ENCODE measurements at regions of chr20 and their contacts with region 1.

Region 1: GRCh38 chr20:19903168-19903811 is 113.9 kb upstream of the NAA20 start:
- DNase-seq: peak; percentile 76
- ATAC-seq: peak; percentile 68
- H3K4me3 ChIP-seq: no peak overlapping the region
- H3K27ac ChIP-seq: peak overlapping the region; percentile 35; the same call in 1 of the 2 replicates
- H3K4me1 ChIP-seq: peaks cover 3% of the 10 kb centered on the region
- H3K27me3 ChIP-seq: no peaks in the 10 kb centered on the region
- CTCF ChIP-seq: peak; percentile 56
- POLR2A ChIP-seq: no peak
- RAD21 ChIP-seq: peak; percentile 62

Region 2: DNA sequence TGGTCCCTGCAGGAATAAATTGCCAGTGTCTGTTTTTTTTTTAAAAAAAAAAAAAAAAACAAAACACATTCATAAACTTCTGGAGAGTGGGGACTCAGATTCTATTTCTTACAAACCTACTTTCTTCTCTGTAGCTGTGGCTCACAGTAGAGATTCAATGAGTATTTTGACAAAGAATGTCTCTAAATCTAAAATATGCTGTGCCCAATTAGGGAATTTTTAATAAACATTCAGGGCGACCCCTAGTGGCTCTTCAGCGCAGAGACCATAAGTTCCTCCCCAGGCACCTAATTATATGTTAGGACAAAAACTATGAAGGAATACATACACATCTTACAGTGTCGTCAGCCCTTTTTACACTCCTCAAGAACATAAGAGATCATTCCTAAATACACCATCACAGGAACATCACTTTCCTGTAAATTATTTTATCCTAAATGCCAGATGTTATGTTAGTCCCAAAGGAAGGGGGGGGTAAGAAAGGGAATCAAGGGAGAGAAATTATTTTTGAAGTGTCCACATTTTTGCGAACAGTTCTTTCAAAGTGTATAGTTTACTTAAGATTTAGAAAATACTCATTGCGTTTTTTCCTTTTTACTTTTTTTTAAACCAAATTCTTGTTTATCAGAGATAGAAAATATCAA is 92.1 kb after region 1 on chr20:
- CTCF ChIA-PET with region 1: no interaction called
- POLR2A ChIA-PET with region 1: no interaction called
- dilution Hi-C with region 1: no loop called
- in situ Hi-C with region 1: no loop called
- intact Hi-C with region 1: loop called (anchors 1 kb)
- DNase-seq: peak; percentile 64
- ATAC-seq: peak; percentile 21
- H3K4me3 ChIP-seq: no peak overlapping the region
- H3K27ac ChIP-seq: peak overlapping the region; percentile 79; the same call in 1 of the 2 replicates
- H3K4me1 ChIP-seq: peaks cover 28% of the 10 kb centered on the region
- H3K27me3 ChIP-seq: no peaks in the 10 kb centered on the region
- CTCF ChIP-seq: peak; percentile 81
- POLR2A ChIP-seq: no peak
- RAD21 ChIP-seq: peak; percentile 70

Region 3: GRCh38 chr20:20010639-20011500 is 107.6 kb after region 1 on chr20:
- CTCF ChIA-PET with region 1: no interaction called
- POLR2A ChIA-PET with region 1: no interaction called
- dilution Hi-C with region 1: no loop called
- in situ Hi-C with region 1: no loop called
- intact Hi-C with region 1: loop called (anchors 2 kb)
- DNase-seq: peak; percentile 81
- ATAC-seq: peak; percentile 87
- H3K4me3 ChIP-seq: no peak overlapping the region
- H3K27ac ChIP-seq: peak overlapping the region; percentile 70; the same call in 1 of the 2 replicates
- H3K4me1 ChIP-seq: peaks cover 8% of the 10 kb centered on the region
- H3K27me3 ChIP-seq: no peaks in the 10 kb centered on the region
- CTCF ChIP-seq: no peak
- POLR2A ChIP-seq: no peak
- RAD21 ChIP-seq: no peak

Region 4: DNA sequence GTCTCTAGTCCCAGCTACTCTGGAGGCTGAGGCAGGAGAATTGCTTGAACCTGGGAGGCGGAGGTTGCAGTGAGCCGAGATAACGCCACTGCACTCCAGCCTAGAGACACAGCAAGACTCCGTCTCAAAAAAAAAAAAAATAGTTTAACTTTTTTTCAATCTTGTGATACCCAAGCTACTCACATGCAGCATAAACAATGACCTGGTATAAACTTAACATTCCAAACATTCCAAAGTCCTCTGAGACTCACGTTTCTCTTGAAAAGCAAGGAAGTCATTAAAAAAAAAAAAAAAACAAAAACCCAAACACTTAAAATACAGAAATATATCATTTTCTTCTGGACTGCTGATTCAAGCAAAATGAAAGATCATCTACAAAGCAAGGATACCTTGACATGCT is 134.7 kb after region 1 on chr20:
- CTCF ChIA-PET with region 1: no interaction called
- POLR2A ChIA-PET with region 1: no interaction called
- dilution Hi-C with region 1: no loop called
- in situ Hi-C with region 1: no loop called
- intact Hi-C with region 1: no loop called
- DNase-seq: peak; percentile 79
- ATAC-seq: peak; percentile 67
- H3K4me3 ChIP-seq: no peak overlapping the region
- H3K27ac ChIP-seq: peak overlapping the region; percentile 58; the same call in 1 of the 2 replicates
- H3K4me1 ChIP-seq: peaks cover 15% of the 10 kb centered on the region
- H3K27me3 ChIP-seq: no peaks in the 10 kb centered on the region
- CTCF ChIP-seq: no peak
- POLR2A ChIP-seq: no peak
- RAD21 ChIP-seq: no peak

Region 5: GRCh38 chr20:20593447-20594170 is 690.3 kb after region 1 on chr20:
- CTCF ChIA-PET with region 1: no interaction called
- POLR2A ChIA-PET with region 1: no interaction called
- dilution Hi-C with region 1: no loop called
- in situ Hi-C with region 1: no loop called
- intact Hi-C with region 1: loop called (anchors 10 kb)
- DNase-seq: peak; percentile 65
- ATAC-seq: peak; percentile 86
- H3K4me3 ChIP-seq: no peak overlapping the region
- H3K27ac ChIP-seq: no peak overlapping the region
- H3K4me1 ChIP-seq: peaks cover 4% of the 10 kb centered on the region
- H3K27me3 ChIP-seq: no peaks in the 10 kb centered on the region
- CTCF ChIP-seq: peak; percentile 56
- POLR2A ChIP-seq: no peak
- RAD21 ChIP-seq: peak; percentile 40

Measured in IMR-90 (cell line).